ENCODE measurements at regions of chr1 and their contacts with region 1.

Region 1: GRCh38 chr1:167599957-167600581 is 30.0 kb upstream of the RCSD1 start:
- DNase-seq: peak; percentile 77
- ATAC-seq: peak; percentile 66
- H3K4me3 ChIP-seq: no peak overlapping the region
- H3K4me3 Mint-ChIP-seq: peak overlapping the region; percentile 66
- H3K27ac ChIP-seq: no peak overlapping the region
- H3K27ac Mint-ChIP-seq: peak overlapping the region; percentile 8
- H3K4me1 ChIP-seq: peaks cover 38 to 39% of the 10 kb centered on the region in 2 donors
- H3K4me1 Mint-ChIP-seq: peaks cover 41% of the 10 kb centered on the region
- H3K27me3 ChIP-seq: no peaks in the 10 kb centered on the region
- H3K27me3 Mint-ChIP-seq: no peaks in the 10 kb centered on the region
- CTCF ChIP-seq: peak; percentile 67

Region 2: DNA sequence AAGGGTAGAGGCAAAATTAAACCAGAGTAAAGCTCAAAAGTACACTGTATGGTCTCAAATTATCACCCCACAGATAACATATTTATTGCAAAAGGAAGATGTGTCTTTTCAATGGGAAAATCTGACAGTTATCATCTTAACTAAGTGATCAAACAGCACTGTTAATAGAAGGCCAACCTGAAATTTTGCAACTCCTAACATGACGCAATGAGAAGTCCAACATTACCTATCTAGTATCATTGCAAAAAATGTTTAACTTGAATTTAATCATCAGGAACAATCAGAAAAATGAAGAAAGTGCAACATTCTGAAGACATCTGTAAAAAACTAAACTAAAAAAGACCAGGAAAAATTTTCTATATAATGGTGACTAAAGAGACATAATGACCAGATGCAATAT is 917.5 kb before region 1 on chr1:
- CTCF ChIA-PET with region 1: no interaction called
- POLR2A ChIA-PET with region 1: no interaction called
- intact Hi-C with region 1: no loop called
- DNase-seq: no peak
- ATAC-seq: no peak
- H3K4me3 ChIP-seq: no peak overlapping the region
- H3K4me3 Mint-ChIP-seq: no peak overlapping the region
- H3K27ac ChIP-seq: no peak overlapping the region
- H3K27ac Mint-ChIP-seq: no peak overlapping the region
- H3K4me1 ChIP-seq: no peaks in the 10 kb centered on the region
- H3K4me1 Mint-ChIP-seq: no peaks in the 10 kb centered on the region
- H3K27me3 ChIP-seq: no peaks in the 10 kb centered on the region
- H3K27me3 Mint-ChIP-seq: no peaks in the 10 kb centered on the region
- CTCF ChIP-seq: no peak

Region 3: DNA sequence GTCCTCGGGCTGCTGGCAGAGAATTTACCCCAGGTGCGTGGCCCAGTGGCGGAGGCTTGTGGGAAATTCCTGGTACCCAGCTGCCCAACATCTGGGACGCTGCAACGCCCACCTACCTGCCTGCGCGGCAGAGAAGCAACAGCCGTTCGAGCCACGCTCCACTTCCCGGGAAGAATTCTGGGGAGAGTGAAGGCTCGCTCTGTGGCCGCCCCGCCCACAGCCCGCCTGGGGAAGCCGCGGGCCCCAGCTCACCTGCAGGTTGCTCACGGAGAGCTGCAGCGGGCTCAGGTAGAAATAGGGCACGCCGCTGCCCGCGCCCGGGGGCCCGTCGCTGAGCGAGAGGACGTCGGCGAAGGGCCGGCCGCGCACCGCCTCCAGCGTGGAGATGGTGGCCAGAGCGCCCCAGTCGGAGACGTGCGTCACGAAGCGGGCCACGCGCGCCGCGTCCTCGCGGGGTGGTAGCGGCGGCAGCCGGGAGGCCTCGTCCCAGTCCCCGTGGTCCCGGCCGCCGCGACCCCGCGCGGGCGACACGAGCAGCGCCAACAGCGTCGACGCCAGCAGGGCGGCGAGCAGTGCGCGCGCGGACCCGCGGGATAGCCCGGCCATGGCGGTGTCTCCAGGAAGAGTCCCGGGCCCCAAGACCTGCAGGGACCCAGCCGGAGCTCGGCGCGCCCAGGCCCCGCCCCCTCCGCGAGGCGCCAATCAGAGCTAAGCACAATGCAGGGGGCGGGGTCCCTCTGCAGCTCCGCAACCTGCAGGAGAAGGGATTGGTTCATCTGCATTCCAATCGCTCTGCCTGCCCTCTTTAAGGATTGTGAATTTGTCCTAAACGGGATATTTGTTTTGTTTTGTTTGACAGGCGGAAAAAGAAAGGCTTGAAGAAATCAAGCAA is 46.7 kb before region 1 on chr1 and contains the start of gene CREG1:
- CTCF ChIA-PET with region 1: interaction called, 10 read pairs
- POLR2A ChIA-PET with region 1: interaction called, 3 read pairs
- intact Hi-C with region 1: loop called (anchors 5 kb)
- DNase-seq: peak; percentile 92
- ATAC-seq: peak; percentile 98
- H3K4me3 ChIP-seq: peak within 1 kb of the TSS; percentile 56 to 82 (median 68)
- H3K4me3 Mint-ChIP-seq: peak within 1 kb of the TSS; percentile 96
- H3K27ac ChIP-seq: no peak within 1 kb of the TSS
- H3K27ac Mint-ChIP-seq: peak within 1 kb of the TSS; percentile 82
- H3K4me1 ChIP-seq: peaks cover 10 to 23% of the 10 kb centered on the region in 2 donors
- H3K4me1 Mint-ChIP-seq: peaks cover 23% of the 10 kb centered on the region
- H3K27me3 ChIP-seq: no peaks in the 10 kb centered on the region
- H3K27me3 Mint-ChIP-seq: no peaks in the 10 kb centered on the region
- CTCF ChIP-seq: no peak
- total RNA-seq, gene CREG1: 8.1 and 8.4 TPM in 2 replicates

Region 4: DNA sequence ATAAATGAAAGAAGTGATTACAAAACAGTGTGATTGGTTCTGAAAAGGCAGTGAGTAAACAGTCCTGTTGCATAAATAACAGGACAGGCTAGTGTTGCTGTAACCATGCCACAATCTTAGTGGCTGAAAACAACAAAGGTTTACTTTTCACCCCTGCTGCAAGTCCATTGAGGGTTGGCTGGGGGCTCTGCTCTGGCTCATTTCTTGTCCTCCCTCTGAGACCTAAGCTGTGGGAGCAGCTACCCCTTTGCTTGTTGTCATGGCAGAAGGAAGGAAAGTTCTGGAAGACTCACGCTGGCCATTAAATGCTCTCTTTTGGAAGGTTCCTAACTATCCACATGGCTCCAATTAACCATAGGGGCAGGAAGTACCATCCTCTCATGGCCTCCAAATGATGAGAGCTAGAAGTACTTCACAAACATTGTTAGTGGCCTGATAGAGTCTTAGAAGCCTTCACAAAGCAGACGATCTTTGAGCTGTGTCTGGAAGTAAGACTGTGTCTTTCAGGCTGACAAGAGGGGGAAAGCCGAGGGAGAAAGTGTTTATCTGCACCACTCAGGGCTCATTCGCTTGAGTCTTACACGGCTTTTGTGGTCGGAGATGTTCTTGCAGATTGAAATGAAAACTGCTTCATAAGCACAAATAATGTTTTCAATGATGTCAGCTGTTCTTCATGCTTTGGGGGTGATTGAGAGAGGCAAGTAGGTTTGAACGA is 41.9 kb after region 1 on chr1:
- CTCF ChIA-PET with region 1: interaction called, 378 read pairs
- POLR2A ChIA-PET with region 1: interaction called, 136 read pairs
- intact Hi-C with region 1: loop called (anchors 1 kb)
- DNase-seq: no peak
- ATAC-seq: no peak
- H3K4me3 ChIP-seq: no peak overlapping the region
- H3K4me3 Mint-ChIP-seq: peak overlapping the region; percentile 5
- H3K27ac ChIP-seq: peak overlapping the region in 1 of 2 donors; percentile 50
- H3K27ac Mint-ChIP-seq: peak overlapping the region; percentile 28
- H3K4me1 ChIP-seq: peaks cover 73 to 79% of the 10 kb centered on the region in 2 donors
- H3K4me1 Mint-ChIP-seq: peaks cover 91% of the 10 kb centered on the region
- H3K27me3 ChIP-seq: no peaks in the 10 kb centered on the region
- H3K27me3 Mint-ChIP-seq: no peaks in the 10 kb centered on the region
- CTCF ChIP-seq: no peak

Region 5: DNA sequence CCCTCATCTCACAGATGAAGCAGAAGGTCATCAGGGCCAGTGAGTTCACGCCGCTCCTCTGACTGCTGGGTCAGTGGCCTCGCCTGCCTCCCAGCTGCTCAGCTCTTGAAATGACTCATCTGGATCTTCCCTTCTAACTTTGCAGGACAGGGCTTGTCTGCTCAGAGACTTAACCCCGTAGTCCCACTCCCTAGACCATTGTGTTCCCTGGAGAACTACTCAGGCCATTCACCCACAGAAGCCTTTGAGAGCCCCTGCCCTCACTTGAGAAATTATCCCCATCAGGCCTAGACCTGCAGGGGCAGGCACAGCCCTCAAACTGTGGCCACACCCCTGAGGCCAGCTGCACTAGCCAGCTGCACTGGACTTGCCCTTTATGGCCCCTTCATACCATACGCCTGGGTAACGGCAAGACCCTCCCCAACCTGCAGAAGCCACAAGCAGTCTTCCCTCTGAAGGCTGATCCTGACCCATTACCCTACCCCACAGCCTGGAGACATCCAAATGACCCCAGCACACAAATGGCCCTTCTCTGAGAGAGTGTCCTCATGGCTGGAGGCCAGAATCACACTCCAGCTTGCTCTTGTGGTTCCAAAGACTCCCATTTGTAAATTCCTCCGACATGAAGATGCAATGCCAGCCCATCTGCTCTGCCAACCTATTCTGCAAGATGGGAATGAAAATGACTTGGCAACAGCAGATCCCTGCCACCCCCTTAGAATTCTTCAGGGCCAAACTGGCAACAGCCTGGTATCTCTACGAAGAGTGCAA is 63.1 kb after region 1 on chr1:
- CTCF ChIA-PET with region 1: interaction called, 21 read pairs
- POLR2A ChIA-PET with region 1: interaction called, 5 read pairs
- intact Hi-C with region 1: no loop called
- DNase-seq: no peak
- ATAC-seq: no peak
- H3K4me3 ChIP-seq: no peak overlapping the region
- H3K4me3 Mint-ChIP-seq: peak overlapping the region; percentile 23
- H3K27ac ChIP-seq: peak overlapping the region in 1 of 2 donors; percentile 72
- H3K27ac Mint-ChIP-seq: peak overlapping the region; percentile 64
- H3K4me1 ChIP-seq: peaks cover 82 to 87% of the 10 kb centered on the region in 2 donors
- H3K4me1 Mint-ChIP-seq: peaks cover 94% of the 10 kb centered on the region
- H3K27me3 ChIP-seq: no peaks in the 10 kb centered on the region
- H3K27me3 Mint-ChIP-seq: no peaks in the 10 kb centered on the region
- CTCF ChIP-seq: no peak

Region 6: GRCh38 chr1:167687919-167688519 is 88.0 kb after region 1 on chr1:
- CTCF ChIA-PET with region 1: interaction called, 201 read pairs
- POLR2A ChIA-PET with region 1: interaction called, 16 read pairs
- intact Hi-C with region 1: loop called (anchors 1 kb)
- DNase-seq: peak; percentile 87
- ATAC-seq: peak; percentile 76
- H3K4me3 ChIP-seq: no peak overlapping the region
- H3K4me3 Mint-ChIP-seq: no peak overlapping the region
- H3K27ac ChIP-seq: peak overlapping the region in 1 of 2 donors; percentile 58
- H3K27ac Mint-ChIP-seq: peak overlapping the region; percentile 77
- H3K4me1 ChIP-seq: peaks cover 4 to 21% of the 10 kb centered on the region in 2 donors
- H3K4me1 Mint-ChIP-seq: peaks cover 48% of the 10 kb centered on the region
- H3K27me3 ChIP-seq: no peaks in the 10 kb centered on the region
- H3K27me3 Mint-ChIP-seq: no peaks in the 10 kb centered on the region
- CTCF ChIP-seq: peak; percentile 96

Region 7: GRCh38 chr1:167715157-167715999 is 115.3 kb after region 1 on chr1:
- CTCF ChIA-PET with region 1: interaction called, 44 read pairs
- POLR2A ChIA-PET with region 1: interaction called, 11 read pairs
- intact Hi-C with region 1: loop called (anchors 1 kb)
- DNase-seq: peak; percentile 94
- ATAC-seq: peak; percentile 58
- H3K4me3 ChIP-seq: peak overlapping the region; percentile 80 to 94 (median 91)
- H3K4me3 Mint-ChIP-seq: peak overlapping the region; percentile 93
- H3K27ac ChIP-seq: peak overlapping the region in 1 of 2 donors; percentile 54
- H3K27ac Mint-ChIP-seq: peak overlapping the region; percentile 98
- H3K4me1 ChIP-seq: peaks cover 37 to 41% of the 10 kb centered on the region in 2 donors
- H3K4me1 Mint-ChIP-seq: peaks cover 44% of the 10 kb centered on the region
- H3K27me3 ChIP-seq: no peaks in the 10 kb centered on the region
- H3K27me3 Mint-ChIP-seq: no peaks in the 10 kb centered on the region
- CTCF ChIP-seq: peak; percentile 85